ENCODE measurements at regions of chr1 and their contacts with region 1.

Region 1: GRCh38 chr1:106755682-106756406 is 300.6 kb upstream of the PRMT6 start:
- DNase-seq: peak; percentile 10
- ATAC-seq: no peak
- H3K4me3 ChIP-seq: no peak overlapping the region
- H3K27ac ChIP-seq: no peak overlapping the region
- H3K4me1 ChIP-seq: no peaks in the 10 kb centered on the region
- H3K27me3 ChIP-seq: no peaks in the 10 kb centered on the region
- CTCF ChIP-seq: no peak
- POLR2A ChIP-seq: no peak
- RAD21 ChIP-seq: no peak

Region 2: DNA sequence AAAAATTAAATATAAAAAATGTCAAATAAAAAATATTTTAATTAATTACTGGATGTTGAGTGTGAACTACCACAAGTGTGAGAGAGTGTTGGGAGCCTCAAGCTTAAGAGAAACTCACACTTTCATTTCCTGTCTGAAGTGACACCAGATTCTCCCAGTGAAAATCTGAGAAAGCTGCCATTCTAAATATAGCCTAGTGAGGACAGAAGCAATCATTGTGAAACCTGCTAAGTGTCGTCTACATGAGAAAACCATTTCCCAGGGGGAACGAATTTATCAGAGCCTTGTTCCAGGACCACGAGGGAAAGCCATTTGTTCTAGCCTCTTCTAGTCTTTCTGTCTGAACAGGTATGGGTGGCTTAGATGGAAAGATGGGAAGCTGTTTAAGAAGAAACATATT is 28.7 kb before region 1 on chr1:
- CTCF ChIA-PET with region 1: no interaction called
- POLR2A ChIA-PET with region 1: no interaction called
- dilution Hi-C with region 1: no loop called
- in situ Hi-C with region 1: no loop called
- intact Hi-C with region 1: loop called (anchors 1 kb)
- DNase-seq: no peak
- ATAC-seq: no peak
- H3K4me3 ChIP-seq: no peak overlapping the region
- H3K27ac ChIP-seq: no peak overlapping the region
- H3K4me1 ChIP-seq: no peaks in the 10 kb centered on the region
- H3K27me3 ChIP-seq: no peaks in the 10 kb centered on the region
- CTCF ChIP-seq: no peak
- POLR2A ChIP-seq: no peak
- RAD21 ChIP-seq: no peak

Measured in IMR-90 (cell line).